K562 (cell line): ENCODE measurements at regions of chr16 and their contacts with region 1.

Region 1: DNA sequence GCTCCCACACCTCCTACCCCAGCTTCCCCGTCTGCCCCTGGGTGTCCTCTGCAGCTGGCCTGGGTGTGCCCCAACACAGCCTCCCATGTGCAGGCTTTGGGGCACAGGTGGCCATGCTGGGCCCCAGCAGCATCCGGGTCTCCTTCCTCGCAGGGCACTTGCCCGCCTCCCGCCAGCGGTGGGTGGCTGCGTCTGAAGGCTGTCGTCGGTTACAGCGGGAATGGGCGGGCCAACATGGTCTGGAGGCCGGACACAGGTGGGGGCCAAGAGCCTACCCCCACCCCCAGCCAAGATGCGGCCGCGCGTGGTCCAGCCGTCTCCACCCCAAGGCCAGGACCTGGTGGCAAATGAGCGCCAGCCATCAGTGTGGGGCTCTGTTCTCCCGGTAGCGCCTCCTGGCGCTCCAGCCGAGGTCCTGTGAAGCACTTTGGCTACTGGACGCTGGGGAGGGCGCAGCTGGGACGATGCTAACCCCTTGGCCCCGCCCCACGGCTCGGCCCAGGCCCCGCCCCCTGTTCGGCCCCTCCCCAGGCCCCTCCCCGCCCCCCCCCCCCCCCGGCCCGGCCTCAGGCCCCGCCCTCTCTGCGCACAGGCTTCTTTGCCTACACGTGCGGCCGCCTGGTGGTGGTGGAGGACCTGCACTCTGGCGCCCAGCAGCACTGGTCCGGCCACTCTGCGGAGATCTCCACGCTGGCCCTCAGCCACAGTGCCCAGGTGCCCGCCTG is 7.3 kb upstream of the RHOT2 start:
- DNase-seq: peak; percentile 95 to 98 (median 97)
- ATAC-seq: peak; percentile 99
- H3K4me3 ChIP-seq: peak overlapping the region; percentile 20; the same call in 1 of the 2 replicates
- H3K27ac ChIP-seq: peak overlapping the region; percentile 66; the same call in 2 of the 3 replicates
- H3K4me1 ChIP-seq: peaks cover 2 to 92% of the 10 kb centered on the region in 2 experiments; a peak in 4 of 5 replicates
- H3K27me3 ChIP-seq: no peaks in the 10 kb centered on the region
- CTCF ChIP-seq: peak; percentile 55 to 92 (median 80)
- EP300 ChIP-seq: 0 out of 2 replicates have a peak, but pooled peaks have one; percentile 9
- POLR2A ChIP-seq: no peak; the same call in 1 of the 2 replicates
- RAD21 ChIP-seq: peak; percentile 64 to 69

Region 2: GRCh38 chr16:589658-590159 is 70.9 kb before region 1 on chr16 and contains the start of gene RAB40C:
- CTCF ChIA-PET with region 1: no interaction called
- POLR2A ChIA-PET with region 1: interaction called, 3 read pairs
- in situ Hi-C with region 1: no loop called
- intact Hi-C with region 1: loop called (anchors 2 kb)
- DNase-seq: peak; percentile 95 to 99 (median 98)
- ATAC-seq: peak; percentile 90
- H3K4me3 ChIP-seq: peak within 1 kb of the TSS; percentile 90
- H3K27ac ChIP-seq: peak within 1 kb of the TSS; percentile 91
- H3K4me1 ChIP-seq: peaks cover 18 to 72% of the 10 kb centered on the region in 2 experiments; a peak in 4 of 5 replicates
- H3K27me3 ChIP-seq: no peaks in the 10 kb centered on the region
- CTCF ChIP-seq: peak in 2 of 3 experiments; percentile 39 to 40; a peak in 3 of 6 replicates
- EP300 ChIP-seq: no peak; the same call in 1 of the 2 replicates
- POLR2A ChIP-seq: peak; percentile 55; the same call in 1 of the 2 replicates
- RAD21 ChIP-seq: no peak
- polyA plus RNA-seq, gene RAB40C: 0.17 to 0.50 TPM